Caco-2 (cell line): ENCODE measurements at regions of chr13 and their contacts with region 1.

Region 1: GRCh38 chr13:97344265-97345175 is 89.4 kb upstream of the RAP2A start:
- DNase-seq: peak; percentile 65 to 69
- H3K4me3 ChIP-seq: no peak overlapping the region
- H3K4me3 Mint-ChIP-seq: no peak overlapping the region
- H3K27ac Mint-ChIP-seq: no peak overlapping the region
- H3K4me1 ChIP-seq: peaks cover 11% of the 10 kb centered on the region; the same call in 1 of the 2 replicates
- H3K4me1 Mint-ChIP-seq: peaks cover 8% of the 10 kb centered on the region
- H3K27me3 ChIP-seq: no peaks in the 10 kb centered on the region
- H3K27me3 Mint-ChIP-seq: no peaks in the 10 kb centered on the region
- CTCF ChIP-seq: peak; percentile 71 to 84

Region 2: GRCh38 chr13:97018029-97018831 is 326.3 kb before region 1 on chr13:
- CTCF ChIA-PET with region 1: interaction called, 4 read pairs
- POLR2A ChIA-PET with region 1: no interaction called
- intact Hi-C with region 1: loop called (anchors 1 kb)
- DNase-seq: peak; percentile 52 to 59
- H3K4me3 ChIP-seq: no peak overlapping the region
- H3K4me3 Mint-ChIP-seq: peak overlapping the region; percentile 58
- H3K27ac Mint-ChIP-seq: no peak overlapping the region
- H3K4me1 ChIP-seq: peaks cover 21% of the 10 kb centered on the region
- H3K4me1 Mint-ChIP-seq: peaks cover 11% of the 10 kb centered on the region
- H3K27me3 ChIP-seq: no peaks in the 10 kb centered on the region
- H3K27me3 Mint-ChIP-seq: peaks cover 7% of the 10 kb centered on the region
- CTCF ChIP-seq: peak; percentile 79 to 91

Region 3: GRCh38 chr13:97212601-97213040 is 131.9 kb before region 1 on chr13:
- CTCF ChIA-PET with region 1: no interaction called
- POLR2A ChIA-PET with region 1: no interaction called
- intact Hi-C with region 1: loop called (anchors 1 kb)
- DNase-seq: peak in 1 of 2 experiments; percentile 65
- H3K4me3 ChIP-seq: no peak overlapping the region
- H3K4me3 Mint-ChIP-seq: no peak overlapping the region
- H3K27ac Mint-ChIP-seq: no peak overlapping the region
- H3K4me1 ChIP-seq: peaks cover 24% of the 10 kb centered on the region
- H3K4me1 Mint-ChIP-seq: peaks cover 22% of the 10 kb centered on the region
- H3K27me3 ChIP-seq: no peaks in the 10 kb centered on the region
- H3K27me3 Mint-ChIP-seq: no peaks in the 10 kb centered on the region
- CTCF ChIP-seq: peak; percentile 59 to 69

Region 4: GRCh38 chr13:97243915-97244781 is 100.4 kb before region 1 on chr13:
- CTCF ChIA-PET with region 1: no interaction called
- POLR2A ChIA-PET with region 1: no interaction called
- intact Hi-C with region 1: loop called (anchors 1 kb)
- DNase-seq: peak; percentile 60 to 61
- H3K4me3 ChIP-seq: no peak overlapping the region
- H3K4me3 Mint-ChIP-seq: peak overlapping the region; percentile 9
- H3K27ac Mint-ChIP-seq: peak overlapping the region; percentile 48
- H3K4me1 ChIP-seq: peaks cover 44% of the 10 kb centered on the region
- H3K4me1 Mint-ChIP-seq: peaks cover 40% of the 10 kb centered on the region
- H3K27me3 ChIP-seq: no peaks in the 10 kb centered on the region
- H3K27me3 Mint-ChIP-seq: no peaks in the 10 kb centered on the region
- CTCF ChIP-seq: no peak

Region 5: DNA sequence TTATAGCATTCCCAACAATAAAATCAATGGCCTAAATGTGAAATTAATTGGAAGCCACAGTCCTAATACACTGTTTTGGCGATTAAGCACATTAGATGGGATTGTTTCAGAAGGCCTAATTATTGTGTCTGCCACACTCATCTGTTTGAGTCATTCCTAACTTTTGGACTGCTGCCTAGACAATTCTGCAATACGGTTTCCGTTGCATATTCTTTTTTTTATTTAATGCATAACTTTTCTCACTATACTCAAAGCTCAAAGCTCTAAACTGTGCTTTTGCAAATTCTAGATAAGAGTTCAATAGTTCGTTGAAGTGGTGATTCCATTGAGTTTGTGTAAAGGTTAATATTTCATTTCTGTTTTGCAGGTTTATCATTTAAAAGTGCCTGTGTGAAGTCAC is 69.3 kb before region 1 on chr13:
- CTCF ChIA-PET with region 1: no interaction called
- POLR2A ChIA-PET with region 1: no interaction called
- intact Hi-C with region 1: loop called (anchors 5 kb)
- DNase-seq: no peak
- H3K4me3 ChIP-seq: no peak overlapping the region
- H3K4me3 Mint-ChIP-seq: no peak overlapping the region
- H3K27ac Mint-ChIP-seq: peak overlapping the region; percentile 29
- H3K4me1 ChIP-seq: peaks cover 71% of the 10 kb centered on the region
- H3K4me1 Mint-ChIP-seq: peaks cover 25% of the 10 kb centered on the region
- H3K27me3 ChIP-seq: no peaks in the 10 kb centered on the region
- H3K27me3 Mint-ChIP-seq: no peaks in the 10 kb centered on the region
- CTCF ChIP-seq: no peak